ENCODE measurements at regions of chr17 and their contacts with region 1.

Region 1: DNA sequence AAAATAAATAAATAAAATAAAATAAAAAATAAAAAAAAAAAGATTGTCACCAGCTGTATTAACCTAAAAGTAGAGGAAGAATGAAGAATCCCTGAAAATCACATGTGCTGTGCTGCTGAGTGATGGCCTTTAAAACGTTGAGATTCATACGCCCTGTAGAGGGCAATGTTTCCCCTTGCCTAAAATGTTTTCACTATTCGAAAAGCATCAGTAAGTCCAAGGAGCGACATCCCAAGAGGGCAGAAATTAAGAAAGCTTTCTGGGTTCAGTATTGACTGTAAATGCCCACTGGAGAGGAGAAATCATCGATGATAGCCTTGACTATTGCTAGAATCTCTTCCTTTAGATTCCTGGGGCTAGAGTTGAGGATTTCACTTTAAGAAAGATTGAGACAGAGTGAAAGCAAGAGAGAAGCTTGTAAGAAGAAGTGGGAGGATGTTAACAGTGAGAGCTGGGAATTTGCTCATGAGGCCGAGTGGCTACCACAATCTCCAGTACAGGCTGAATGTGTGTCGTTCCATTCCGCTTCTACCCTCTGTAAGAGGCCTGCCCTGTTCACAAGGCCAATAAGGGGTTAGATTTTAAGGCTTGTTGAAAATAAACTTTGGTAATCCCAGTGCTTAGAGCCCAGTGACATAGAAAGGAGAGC is 170.8 kb upstream of the FAM20A start:
- DNase-seq: no peak
- H3K4me3 ChIP-seq: peak overlapping the region in 2 of 8 donors; percentile 21 to 53
- H3K27ac ChIP-seq: peak overlapping the region in 6 of 8 donors; percentile 39 to 60 (median 54)
- H3K4me1 ChIP-seq: peaks cover 0 to 26% (median 15%) of the 10 kb centered on the region in 6 donors
- H3K27me3 ChIP-seq: no peaks in the 10 kb centered on the region
- CTCF ChIP-seq: peak; percentile 36 to 76 (median 59)
- POLR2A ChIP-seq: no peak

Region 2: GRCh38 chr17:68972119-68972704 is 200.2 kb after region 1 on chr17:
- intact Hi-C with region 1: loop called (anchors 10 kb)
- DNase-seq: no peak
- H3K4me3 ChIP-seq: no peak overlapping the region
- H3K27ac ChIP-seq: no peak overlapping the region
- H3K4me1 ChIP-seq: peaks cover 0 to 12% (median 3%) of the 10 kb centered on the region in 6 donors
- H3K27me3 ChIP-seq: no peaks in the 10 kb centered on the region
- CTCF ChIP-seq: peak in 8 of 11 experiments; percentile 33 to 63 (median 48)
- POLR2A ChIP-seq: no peak

Measured in spleen (tissue), 13 donors.